SK-N-SH (cell line): ENCODE measurements at regions of chr2 and their contacts with region 1.

Region 1: GRCh38 chr2:219160186-219161017 is at the start of gene NHEJ1:
- DNase-seq: peak; percentile 98
- H3K4me3 ChIP-seq: peak within 1 kb of the TSS; percentile 69 to 75
- H3K27ac ChIP-seq: peak within 1 kb of the TSS; percentile 90 to 99
- H3K4me1 ChIP-seq: peaks cover 0 to 11% of the 10 kb centered on the region in 2 experiments; a peak in 1 of 4 replicates
- H3K27me3 ChIP-seq: no peaks in the 10 kb centered on the region
- CTCF ChIP-seq: peak; percentile 96
- EP300 ChIP-seq: no peak
- RAD21 ChIP-seq: peak; percentile 81
- polyA plus RNA-seq, gene NHEJ1: 16.3 and 21.0 TPM in 2 replicates

Region 2: GRCh38 chr2:218995972-218996711 is 164.3 kb before region 1 on chr2:
- CTCF ChIA-PET with region 1: interaction called, 28 read pairs
- POLR2A ChIA-PET with region 1: no interaction called
- DNase-seq: peak; percentile 96
- H3K4me3 ChIP-seq: peak overlapping the region; percentile 57 to 61
- H3K27ac ChIP-seq: peak overlapping the region in 1 of 2 experiments; percentile 99; a peak in 2 of 4 replicates
- H3K4me1 ChIP-seq: peaks cover 0 to 61% of the 10 kb centered on the region in 2 experiments; a peak in 2 of 4 replicates
- H3K27me3 ChIP-seq: no peaks in the 10 kb centered on the region
- CTCF ChIP-seq: peak; percentile 85
- EP300 ChIP-seq: 0 out of 4 replicates have a peak, but pooled peaks of 1 of the 2 experiments have one; percentile 24
- RAD21 ChIP-seq: peak; percentile 96

Region 3: GRCh38 chr2:219057709-219058540 is 102.5 kb before region 1 on chr2:
- CTCF ChIA-PET with region 1: interaction called, 205 read pairs
- POLR2A ChIA-PET with region 1: no interaction called
- DNase-seq: peak; percentile 86
- H3K4me3 ChIP-seq: peak overlapping the region in 1 of 2 experiments; percentile 35; a peak in 1 of 4 replicates
- H3K27ac ChIP-seq: no peak overlapping the region
- H3K4me1 ChIP-seq: peaks cover 0 to 16% of the 10 kb centered on the region in 2 experiments; a peak in 1 of 4 replicates
- H3K27me3 ChIP-seq: peaks cover 43% of the 10 kb centered on the region
- CTCF ChIP-seq: peak; percentile 78
- EP300 ChIP-seq: no peak
- RAD21 ChIP-seq: peak; percentile 77

Region 4: DNA sequence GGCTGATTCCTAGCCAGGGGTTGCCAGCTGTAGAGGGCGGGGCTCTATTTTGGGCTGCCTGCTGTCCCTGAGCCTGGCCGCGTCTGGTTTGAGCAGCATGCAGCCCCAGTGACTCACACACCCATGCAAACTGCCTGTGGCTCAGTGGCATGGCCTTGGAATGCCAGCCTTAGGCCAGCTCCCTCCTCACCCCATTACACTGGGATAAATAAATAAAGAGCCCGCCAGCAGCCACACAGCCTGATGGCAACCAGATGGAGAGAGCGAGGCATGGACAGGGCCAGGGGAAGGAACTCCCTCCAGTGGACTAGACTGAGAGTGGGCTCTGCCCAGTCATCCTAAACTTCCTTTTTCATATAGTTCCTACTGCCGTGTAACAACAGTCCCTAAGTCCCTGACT is 18.1 kb before region 1 on chr2:
- CTCF ChIA-PET with region 1: interaction called, 14 read pairs
- POLR2A ChIA-PET with region 1: no interaction called
- DNase-seq: peak; percentile 48
- H3K4me3 ChIP-seq: no peak overlapping the region
- H3K27ac ChIP-seq: peak overlapping the region in 1 of 2 experiments; percentile 19; a peak in 2 of 4 replicates
- H3K4me1 ChIP-seq: peaks cover 8 to 10% of the 10 kb centered on the region in 2 experiments; a peak in 1 of 4 replicates
- H3K27me3 ChIP-seq: no peaks in the 10 kb centered on the region
- CTCF ChIP-seq: peak; percentile 38; the same call in 1 of the 2 replicates
- EP300 ChIP-seq: no peak
- RAD21 ChIP-seq: no peak

Region 5: DNA sequence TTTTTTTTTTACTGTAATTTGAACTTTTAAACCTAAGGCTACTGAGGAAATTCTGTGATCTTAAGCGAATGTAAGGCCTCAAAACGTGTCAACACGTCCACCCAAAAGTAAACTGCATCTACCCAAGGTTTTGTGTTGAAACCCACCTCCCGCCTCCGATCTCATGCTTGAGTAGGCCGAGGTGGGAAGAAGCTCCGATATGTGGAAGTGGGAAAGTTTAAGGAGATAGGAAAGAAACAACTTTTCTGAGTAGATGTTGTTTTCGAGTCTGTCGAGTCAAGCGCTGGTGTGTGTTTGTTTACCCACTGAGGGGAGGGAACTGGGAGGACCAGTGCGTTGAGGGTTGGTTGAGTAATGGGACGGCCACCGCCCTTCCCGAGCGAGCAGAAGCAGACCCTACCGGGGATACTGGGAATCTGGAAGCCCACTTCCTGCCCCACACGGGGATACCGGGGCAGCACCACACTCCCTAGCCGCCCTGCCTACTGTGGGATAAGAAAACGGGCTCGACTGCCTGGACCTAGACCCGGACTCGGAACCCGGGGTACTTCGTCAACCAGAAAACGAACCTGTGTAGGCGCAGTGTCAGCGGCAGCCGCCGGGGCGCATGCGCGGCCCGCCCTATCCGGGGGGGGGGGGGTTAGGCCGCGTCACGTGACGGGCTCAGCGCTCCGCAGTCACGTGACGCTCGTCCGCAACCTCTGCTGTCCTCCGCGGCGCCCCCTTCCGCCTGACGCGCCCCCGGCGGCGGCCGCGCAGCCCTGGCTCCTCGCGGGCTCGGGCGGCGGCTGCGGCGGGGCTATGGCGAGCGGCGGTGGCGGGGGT is 17.4 kb after region 1 on chr2 and contains the start of gene RETREG2:
- CTCF ChIA-PET with region 1: interaction called, 104 read pairs
- POLR2A ChIA-PET with region 1: interaction called, 5 read pairs
- DNase-seq: peak; percentile 99
- H3K4me3 ChIP-seq: peak within 1 kb of the TSS; percentile 80 to 89
- H3K27ac ChIP-seq: peak within 1 kb of the TSS; percentile 95 to 97
- H3K4me1 ChIP-seq: peaks cover 0 to 17% of the 10 kb centered on the region in 2 experiments; a peak in 2 of 4 replicates
- H3K27me3 ChIP-seq: no peaks in the 10 kb centered on the region
- CTCF ChIP-seq: peak; percentile 39
- EP300 ChIP-seq: 0 out of 4 replicates have a peak, but pooled peaks have one; percentile 12 to 21
- RAD21 ChIP-seq: no peak
- polyA plus RNA-seq, gene RETREG2: 74.6 and 94.8 TPM in 2 replicates

Region 6: DNA sequence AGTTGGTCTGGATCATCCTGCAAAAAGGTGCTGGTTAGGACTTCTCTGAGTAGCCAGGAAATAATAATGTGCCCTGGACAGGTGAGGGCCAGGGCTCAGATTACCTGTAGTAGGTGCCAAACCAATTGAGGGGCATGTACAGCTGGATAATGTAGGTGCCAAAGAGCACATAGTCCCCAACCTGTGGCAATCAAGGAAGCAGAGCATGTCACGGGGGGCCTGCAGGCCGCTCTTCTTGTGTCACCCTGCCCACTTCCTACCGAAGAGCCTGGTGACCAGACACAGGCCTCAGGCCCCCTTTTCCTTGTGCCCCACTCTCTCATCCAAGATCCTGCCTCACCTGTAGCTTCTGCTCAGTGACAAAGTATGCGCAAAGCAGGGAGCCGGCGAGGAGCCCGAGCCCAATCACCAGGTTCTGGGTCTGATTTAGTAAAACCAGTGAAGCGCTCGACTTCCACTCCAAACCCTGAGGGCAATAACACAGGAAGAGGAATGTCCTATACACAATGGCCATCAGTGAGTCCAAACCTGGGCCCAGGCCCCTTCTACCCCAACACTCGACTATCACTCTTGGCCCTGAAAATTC is 53.2 kb after region 1 on chr2:
- CTCF ChIA-PET with region 1: interaction called, 16 read pairs
- POLR2A ChIA-PET with region 1: no interaction called
- DNase-seq: no peak
- H3K4me3 ChIP-seq: no peak overlapping the region
- H3K27ac ChIP-seq: no peak overlapping the region
- H3K4me1 ChIP-seq: peaks cover 0 to 19% of the 10 kb centered on the region in 2 experiments; a peak in 1 of 4 replicates
- H3K27me3 ChIP-seq: no peaks in the 10 kb centered on the region
- CTCF ChIP-seq: no peak
- EP300 ChIP-seq: no peak
- RAD21 ChIP-seq: no peak